Right cardiac atrium (tissue), 5 donors: ENCODE measurements at regions of chr15 and their contacts with region 1.

Region 1: DNA sequence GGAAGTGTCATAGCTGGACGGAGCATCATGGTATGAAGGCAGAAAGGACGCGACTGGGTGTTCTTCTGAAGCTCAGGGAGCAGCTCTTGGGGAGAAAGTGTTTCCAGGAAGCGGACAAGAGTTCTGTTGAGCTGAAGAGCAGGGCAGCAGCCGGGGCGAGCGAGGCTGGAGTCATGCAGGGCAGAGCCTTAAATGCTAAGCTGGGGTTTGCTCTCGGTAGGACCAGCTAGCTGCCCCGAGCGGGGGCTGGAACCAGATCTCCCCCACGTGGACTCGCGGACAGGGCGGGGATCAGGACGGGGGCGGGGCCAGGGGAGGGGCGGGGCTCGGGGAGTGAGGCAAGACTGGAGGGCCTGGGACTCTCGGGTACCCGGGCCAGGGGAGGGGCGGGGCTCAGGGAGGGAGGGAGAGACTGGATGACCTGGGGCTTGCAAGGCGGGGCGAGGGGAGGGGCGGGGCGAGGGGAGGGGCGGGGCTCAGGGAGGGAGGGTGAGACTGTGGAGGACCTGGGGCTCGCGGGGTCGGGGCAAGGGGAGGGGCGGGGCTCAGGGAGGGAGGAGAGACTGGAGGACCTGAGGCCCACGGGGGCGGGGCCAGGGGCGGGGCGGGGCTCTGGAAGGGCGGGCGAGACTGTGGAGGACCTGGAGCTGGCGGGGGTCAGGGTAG is 486 bp upstream of the FAH start:
- DNase-seq: peak; percentile 98 to 99 (median 99)
- ATAC-seq: peak; percentile 94 to 95
- H3K4me3 ChIP-seq: peak overlapping the region; percentile 59
- H3K27ac ChIP-seq: peak overlapping the region; percentile 61
- H3K4me1 ChIP-seq: peaks cover 4% of the 10 kb centered on the region
- H3K27me3 ChIP-seq: no peaks in the 10 kb centered on the region

Region 2: DNA sequence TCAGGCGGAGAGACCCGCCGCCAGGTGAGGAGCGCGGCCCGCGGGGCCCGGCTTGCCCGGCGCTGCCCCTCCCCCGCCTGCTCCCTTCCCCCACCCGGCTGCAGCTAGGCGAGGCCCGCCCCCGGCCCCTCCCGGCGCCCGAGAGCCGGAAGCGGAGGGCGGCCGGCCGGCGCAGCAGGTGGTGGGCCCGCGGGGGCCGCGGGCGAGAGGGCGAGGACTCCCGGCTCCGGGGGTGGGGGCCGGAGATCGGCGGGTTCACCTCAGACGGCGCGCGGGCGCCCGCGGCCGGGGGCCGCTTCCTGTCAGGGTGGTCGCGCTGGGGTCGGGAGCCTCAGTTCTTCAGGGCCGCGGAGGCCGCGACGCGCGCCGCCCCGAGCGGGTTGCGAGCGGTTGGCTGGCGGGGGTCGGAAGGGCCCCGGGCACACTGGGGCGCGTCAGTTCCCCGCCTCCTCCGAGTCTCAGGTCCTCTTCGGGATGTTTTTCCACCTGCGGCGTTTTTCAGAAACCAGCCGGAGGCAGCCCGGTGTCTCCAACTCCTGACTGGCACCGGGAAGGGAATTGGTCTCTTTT is 92.4 kb before region 1 on chr15:
- intact Hi-C with region 1: loop called in 1 of 4 experiments (anchors 5 kb)
- DNase-seq: no peak
- ATAC-seq: peak; percentile 90 to 91
- H3K4me3 ChIP-seq: peak overlapping the region; percentile 99
- H3K27ac ChIP-seq: peak overlapping the region; percentile 93
- H3K4me1 ChIP-seq: no peaks in the 10 kb centered on the region
- H3K27me3 ChIP-seq: no peaks in the 10 kb centered on the region

Region 3: GRCh38 chr15:80228959-80229610 is 76.8 kb after region 1 on chr15:
- intact Hi-C with region 1: no loop called
- DNase-seq: no peak
- ATAC-seq: no peak
- H3K4me3 ChIP-seq: no peak overlapping the region
- H3K27ac ChIP-seq: no peak overlapping the region
- H3K4me1 ChIP-seq: no peaks in the 10 kb centered on the region
- H3K27me3 ChIP-seq: no peaks in the 10 kb centered on the region